ENCODE measurements at regions of chr4 and their contacts with region 1.

Region 1: DNA sequence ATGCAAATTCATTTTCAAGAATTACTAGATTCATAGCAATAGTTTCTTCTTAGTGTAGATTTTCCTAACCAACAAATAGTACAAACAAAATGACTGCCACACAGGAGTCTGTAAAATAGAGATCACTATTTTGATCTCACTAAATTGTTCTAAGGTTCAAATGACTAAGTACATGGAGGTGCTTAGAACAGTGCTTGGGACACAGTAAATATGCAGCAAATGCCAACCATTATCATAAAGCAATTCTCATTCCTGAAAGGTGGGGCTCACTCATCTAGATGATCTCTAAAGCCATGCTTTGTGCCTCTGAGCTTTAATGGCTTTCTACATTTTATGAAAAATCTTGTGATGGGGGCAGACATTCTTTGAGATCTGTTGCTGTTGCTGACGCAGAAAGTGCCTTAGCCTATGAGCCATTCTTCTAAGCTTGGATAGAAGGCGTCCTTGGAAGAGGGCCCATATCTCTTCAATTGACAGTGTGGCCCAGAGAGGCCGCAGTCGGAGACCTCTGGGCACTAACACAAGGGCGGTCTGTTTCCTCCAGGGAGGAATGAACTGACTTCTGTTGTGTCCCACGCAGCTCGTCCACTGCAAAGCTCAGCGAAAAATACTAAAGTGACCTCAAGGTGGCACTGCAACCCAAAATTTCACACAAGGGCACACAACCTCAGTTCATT is 23.5 kb downstream of the TLR10 start:
- DNase-seq: peak in 4 of 5 donors; percentile 61 to 69 (median 64)
- ATAC-seq: peak; percentile 63 to 91 (median 84)
- H3K4me3 ChIP-seq: no peak overlapping the region
- H3K27ac ChIP-seq: peak overlapping the region in 1 of 12 donors; percentile 25
- H3K4me1 ChIP-seq: peaks cover 0 to 44% (median 0%) of the 10 kb centered on the region in 12 donors
- H3K27me3 ChIP-seq: no peaks in the 10 kb centered on the region
- CTCF ChIP-seq: peak; percentile 60 to 81 (median 71)
- POLR2A ChIP-seq: no peak

Region 2: GRCh38 chr4:38468339-38468866 is 290.8 kb before region 1 on chr4:
- intact Hi-C with region 1: no loop called
- DNase-seq: no peak
- ATAC-seq: peak in 3 of 4 donors; percentile 55 to 65 (median 59)
- H3K4me3 ChIP-seq: no peak overlapping the region
- H3K27ac ChIP-seq: no peak overlapping the region
- H3K4me1 ChIP-seq: peaks cover 0 to 13% (median 0%) of the 10 kb centered on the region in 12 donors
- H3K27me3 ChIP-seq: no peaks in the 10 kb centered on the region
- CTCF ChIP-seq: no peak
- POLR2A ChIP-seq: no peak

Region 3: GRCh38 chr4:38782452-38783108 is 23.3 kb after region 1 on chr4 and contains the start of gene TLR10:
- intact Hi-C with region 1: loop called in 3 of 10 experiments (anchors 1 to 2 kb)
- DNase-seq: peak in 2 of 5 donors; percentile 33 to 40
- ATAC-seq: peak in 3 of 4 donors; percentile 59 to 78 (median 71)
- H3K4me3 ChIP-seq: no peak within 1 kb of the TSS
- H3K27ac ChIP-seq: no peak within 1 kb of the TSS
- H3K4me1 ChIP-seq: peaks cover 0 to 16% (median 0%) of the 10 kb centered on the region in 12 donors
- H3K27me3 ChIP-seq: no peaks in the 10 kb centered on the region
- CTCF ChIP-seq: peak; percentile 65 to 83 (median 72)
- POLR2A ChIP-seq: no peak
- total RNA-seq, gene TLR10: 0.18 to 0.24 TPM in 2 of 9 donors, not detected in the others

Region 4: GRCh38 chr4:38804654-38805295 is 45.5 kb after region 1 on chr4 and contains the start of gene TLR1:
- intact Hi-C with region 1: loop called in 1 of 10 experiments (anchors 5 kb)
- DNase-seq: no peak
- ATAC-seq: peak; percentile 21 to 60 (median 45)
- H3K4me3 ChIP-seq: peak within 1 kb of the TSS in 10 of 12 donors; percentile 29 to 56 (median 42)
- H3K27ac ChIP-seq: peak within 1 kb of the TSS; percentile 14 to 93 (median 62)
- H3K4me1 ChIP-seq: peaks cover 0 to 35% (median 6%) of the 10 kb centered on the region in 12 donors
- H3K27me3 ChIP-seq: no peaks in the 10 kb centered on the region
- CTCF ChIP-seq: peak in 11 of 12 donors; percentile 40 to 67 (median 53)
- POLR2A ChIP-seq: no peak
- total RNA-seq, gene TLR1: 2.3 to 31.8 (median 3.1) TPM

Region 5: GRCh38 chr4:38856524-38857337 is 97.5 kb after region 1 on chr4 and contains the start of gene TLR6:
- intact Hi-C with region 1: loop called in 9 of 10 experiments (anchors 1 to 10 kb)
- DNase-seq: peak in 2 of 5 donors; percentile 33 to 39
- ATAC-seq: peak in 2 of 4 donors; percentile 40 to 47
- H3K4me3 ChIP-seq: peak within 1 kb of the TSS in 9 of 12 donors; percentile 12 to 57 (median 29)
- H3K27ac ChIP-seq: peak within 1 kb of the TSS; percentile 1 to 92 (median 56)
- H3K4me1 ChIP-seq: peaks cover 0 to 45% (median 0%) of the 10 kb centered on the region in 12 donors
- H3K27me3 ChIP-seq: no peaks in the 10 kb centered on the region
- CTCF ChIP-seq: peak; percentile 58 to 92 (median 74)
- POLR2A ChIP-seq: no peak
- total RNA-seq, gene TLR6: 0.83 to 9.8 (median 1.2) TPM

Region 6: GRCh38 chr4:38867478-38868058 is 108.3 kb after region 1 on chr4 and contains the start of gene FAM114A1:
- intact Hi-C with region 1: loop called in 1 of 10 experiments (anchors 10 kb)
- DNase-seq: peak; percentile 87 to 92 (median 88)
- ATAC-seq: peak; percentile 84 to 98 (median 95)
- H3K4me3 ChIP-seq: peak within 1 kb of the TSS; percentile 67 to 93 (median 88)
- H3K27ac ChIP-seq: peak within 1 kb of the TSS; percentile 75 to 96 (median 89)
- H3K4me1 ChIP-seq: peaks cover 0 to 48% (median 16%) of the 10 kb centered on the region in 12 donors
- H3K27me3 ChIP-seq: no peaks in the 10 kb centered on the region
- CTCF ChIP-seq: peak in 2 of 12 donors; percentile 8 to 13
- POLR2A ChIP-seq: no peak
- total RNA-seq, gene FAM114A1: 11.4 to 41.5 (median 24.2) TPM

Region 7: GRCh38 chr4:39004758-39005157 is 245.5 kb after region 1 on chr4:
- intact Hi-C with region 1: no loop called
- DNase-seq: no peak
- ATAC-seq: no peak
- H3K4me3 ChIP-seq: no peak overlapping the region
- H3K27ac ChIP-seq: no peak overlapping the region
- H3K4me1 ChIP-seq: no peaks in the 10 kb centered on the region
- H3K27me3 ChIP-seq: no peaks in the 10 kb centered on the region
- CTCF ChIP-seq: no peak
- POLR2A ChIP-seq: no peak